ENCODE measurements at regions of chr17 and their contacts with region 1.

Region 1: DNA sequence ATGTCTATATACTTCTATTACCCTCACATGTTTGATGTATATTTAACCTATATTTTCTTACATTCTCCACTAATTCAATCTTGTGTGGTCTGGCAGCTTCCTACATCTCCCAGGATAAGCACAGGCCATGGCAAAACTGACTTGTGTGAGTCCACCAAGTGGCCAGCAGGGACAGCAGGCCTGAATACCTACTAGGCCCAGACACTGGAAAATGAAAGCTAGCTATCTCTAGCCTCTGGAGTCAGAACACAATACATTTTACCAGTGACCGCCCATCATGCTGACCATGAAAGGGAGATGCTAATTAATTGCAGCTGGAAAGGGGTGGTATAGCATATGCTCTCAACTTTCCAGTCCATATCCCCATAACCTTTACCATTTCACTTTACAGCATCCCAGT is 132.3 kb downstream of the PCTP start:
- DNase-seq: no peak
- ATAC-seq: no peak
- H3K4me3 Mint-ChIP-seq: no peak overlapping the region
- H3K27ac Mint-ChIP-seq: no peak overlapping the region
- H3K4me1 Mint-ChIP-seq: no peaks in the 10 kb centered on the region
- H3K27me3 Mint-ChIP-seq: no peaks in the 10 kb centered on the region
- CTCF ChIP-seq: no peak

Region 2: DNA sequence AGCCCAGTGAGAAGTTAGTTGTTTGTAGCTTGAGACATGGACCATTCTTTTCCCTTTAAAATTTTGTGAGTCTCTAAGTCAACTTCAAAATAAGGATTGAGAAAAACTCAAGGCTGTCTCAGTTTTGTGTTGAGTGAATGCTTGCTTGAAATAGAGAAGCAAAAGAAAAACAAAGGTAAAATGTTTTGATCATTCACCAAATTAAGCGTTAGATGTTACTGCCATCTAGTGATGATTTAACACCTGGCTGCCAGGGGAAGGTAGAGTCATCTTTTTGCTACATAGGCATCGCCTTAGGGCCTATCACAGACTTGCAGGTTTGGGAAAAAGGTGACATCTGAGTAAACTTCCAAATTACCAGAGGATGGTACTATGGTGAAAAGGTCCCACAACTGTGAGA is 57.9 kb before region 1 on chr17:
- CTCF ChIA-PET with region 1: no interaction called
- POLR2A ChIA-PET with region 1: no interaction called
- intact Hi-C with region 1: loop called (anchors 10 kb)
- DNase-seq: no peak
- ATAC-seq: no peak
- H3K4me3 Mint-ChIP-seq: no peak overlapping the region
- H3K27ac Mint-ChIP-seq: no peak overlapping the region
- H3K4me1 Mint-ChIP-seq: no peaks in the 10 kb centered on the region
- H3K27me3 Mint-ChIP-seq: peaks cover 3% of the 10 kb centered on the region
- CTCF ChIP-seq: no peak